CD4-positive, alpha-beta memory T cell (primary cell): ENCODE measurements at regions of chr10 and their contacts with region 1.

Region 1: DNA sequence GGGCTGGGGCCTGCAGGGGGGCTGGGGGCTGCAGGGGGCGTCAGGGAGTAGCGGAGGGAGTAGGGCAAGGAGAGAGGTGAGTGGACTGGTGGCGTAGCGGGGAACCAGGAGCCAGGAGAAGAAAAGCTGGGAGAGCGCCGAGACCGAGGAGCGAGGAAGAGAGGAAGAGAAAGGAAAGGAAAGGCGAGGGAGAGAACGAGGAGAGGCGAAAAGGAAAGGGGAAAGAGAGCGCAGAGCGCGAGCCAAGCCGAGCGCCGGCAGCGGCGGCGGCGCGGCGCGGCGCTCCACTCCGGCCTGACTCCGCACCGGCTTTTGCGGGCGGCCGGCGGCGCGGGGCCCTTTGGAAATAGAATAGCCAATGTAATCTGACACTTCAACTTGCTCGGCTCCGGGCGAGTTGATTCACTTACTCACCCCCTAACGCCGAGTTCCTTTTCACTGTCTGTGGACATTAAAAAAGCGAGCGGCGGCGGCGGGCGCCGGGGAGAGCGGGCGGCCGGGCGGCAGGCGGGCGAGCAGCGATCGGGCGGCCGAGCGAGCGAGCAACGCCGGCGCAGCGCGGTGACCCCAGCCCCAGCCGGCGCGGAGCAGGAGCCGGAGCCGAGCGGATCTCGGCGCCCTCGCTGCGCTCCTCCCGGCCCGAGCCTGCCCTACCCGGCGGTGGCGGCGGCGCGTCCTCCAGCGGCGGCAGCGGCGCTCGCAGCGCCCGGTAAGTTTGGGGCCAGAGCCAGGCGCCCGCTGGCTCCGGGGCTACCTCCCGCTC is at the start of gene ZMIZ1:
- DNase-seq: peak; percentile 83 to 87 (median 85)
- H3K4me3 ChIP-seq: peak within 1 kb of the TSS; percentile 61 to 85
- H3K4me3 Mint-ChIP-seq: peak within 1 kb of the TSS; percentile 94 to 99 (median 97)
- H3K27ac ChIP-seq: peak within 1 kb of the TSS; percentile 76
- H3K27ac Mint-ChIP-seq: peak within 1 kb of the TSS; percentile 90 to 97 (median 95)
- H3K4me1 ChIP-seq: peaks cover 50% of the 10 kb centered on the region
- H3K4me1 Mint-ChIP-seq: peaks cover 29 to 71% (median 44%) of the 10 kb centered on the region in 4 donors
- H3K27me3 ChIP-seq: no peaks in the 10 kb centered on the region
- H3K27me3 Mint-ChIP-seq: no peaks in the 10 kb centered on the region
- total RNA-seq, gene ZMIZ1: 23.1 to 25.4 TPM

Region 2: GRCh38 chr10:78029269-78030226 is 1039.2 kb before region 1 on chr10 and contains the start of gene POLR3A:
- CTCF ChIA-PET with region 1: no interaction called
- POLR2A ChIA-PET with region 1: interaction called, 3 read pairs
- intact Hi-C with region 1: loop called (anchors 1 kb)
- DNase-seq: peak; percentile 91 to 93 (median 92)
- H3K4me3 ChIP-seq: peak within 1 kb of the TSS; percentile 80 to 98
- H3K4me3 Mint-ChIP-seq: peak within 1 kb of the TSS; percentile 98 to 99 (median 99)
- H3K27ac ChIP-seq: peak within 1 kb of the TSS; percentile 71
- H3K27ac Mint-ChIP-seq: peak within 1 kb of the TSS; percentile 92 to 98 (median 96)
- H3K4me1 ChIP-seq: peaks cover 32% of the 10 kb centered on the region
- H3K4me1 Mint-ChIP-seq: peaks cover 28 to 52% (median 40%) of the 10 kb centered on the region in 4 donors
- H3K27me3 ChIP-seq: no peaks in the 10 kb centered on the region
- H3K27me3 Mint-ChIP-seq: no peaks in the 10 kb centered on the region
- total RNA-seq, gene POLR3A: 16.9 to 17.6 TPM

Region 3: GRCh38 chr10:78302989-78303854 is 765.5 kb before region 1 on chr10:
- CTCF ChIA-PET with region 1: no interaction called
- POLR2A ChIA-PET with region 1: interaction called, 3 read pairs
- intact Hi-C with region 1: loop called (anchors 1 kb)
- DNase-seq: peak; percentile 93 to 96 (median 95)
- H3K4me3 ChIP-seq: peak overlapping the region; percentile 67 to 70
- H3K4me3 Mint-ChIP-seq: peak overlapping the region; percentile 92 to 97 (median 94)
- H3K27ac ChIP-seq: peak overlapping the region; percentile 91
- H3K27ac Mint-ChIP-seq: peak overlapping the region; percentile 95 to 99 (median 98)
- H3K4me1 ChIP-seq: peaks cover 17% of the 10 kb centered on the region
- H3K4me1 Mint-ChIP-seq: peaks cover 7 to 24% (median 14%) of the 10 kb centered on the region in 4 donors
- H3K27me3 ChIP-seq: no peaks in the 10 kb centered on the region
- H3K27me3 Mint-ChIP-seq: peaks cover 0 to 2% of the 10 kb centered on the region in 2 donors

Region 4: DNA sequence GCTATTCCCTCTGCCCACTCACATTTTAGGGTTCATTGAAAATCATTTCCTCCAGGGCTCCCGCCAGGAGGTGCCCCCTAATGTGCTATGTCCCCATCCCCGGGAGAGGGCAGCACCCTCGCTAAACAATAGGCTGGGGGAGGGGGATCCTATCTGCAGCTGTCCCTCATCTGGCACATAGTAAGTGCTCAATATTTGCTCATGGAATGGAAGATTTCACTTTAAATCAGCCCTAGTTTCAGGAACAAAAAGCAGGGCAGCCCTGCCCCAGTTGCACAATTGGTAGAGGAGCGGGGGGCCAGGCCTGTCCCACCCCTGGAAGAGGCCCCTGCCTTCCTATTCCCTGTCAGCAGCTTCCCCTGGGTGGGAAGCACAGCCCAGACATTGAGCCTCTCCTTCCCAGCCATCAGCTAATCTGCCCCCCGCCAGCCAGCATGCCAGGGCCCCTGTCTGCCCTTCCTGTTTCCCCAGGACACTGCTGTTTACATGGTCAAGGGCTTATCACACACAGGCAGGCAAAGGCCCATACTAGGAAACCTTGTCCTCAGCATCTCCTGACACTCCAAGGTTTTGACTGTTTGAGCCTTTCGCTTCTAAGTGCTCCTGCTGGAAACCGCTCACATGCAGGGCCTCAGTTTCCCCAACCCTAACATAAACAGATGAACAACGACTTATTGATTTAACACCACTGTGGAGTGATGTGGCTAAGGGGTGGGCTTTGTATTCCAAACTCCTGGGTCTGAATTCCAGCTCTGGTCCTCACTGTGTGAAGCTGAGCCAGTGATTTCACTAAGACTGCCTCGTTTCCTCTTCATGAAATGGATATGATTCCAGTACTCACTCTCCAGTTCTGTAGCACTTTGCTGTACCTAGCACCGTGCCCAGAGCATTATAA is 130.7 kb before region 1 on chr10:
- CTCF ChIA-PET with region 1: no interaction called
- POLR2A ChIA-PET with region 1: no interaction called
- intact Hi-C with region 1: loop called (anchors 1 kb)
- DNase-seq: peak in 3 of 5 donors; percentile 4 to 17 (median 7)
- H3K4me3 ChIP-seq: no peak overlapping the region
- H3K4me3 Mint-ChIP-seq: no peak overlapping the region
- H3K27ac ChIP-seq: no peak overlapping the region
- H3K27ac Mint-ChIP-seq: peak overlapping the region in 1 of 7 donors; percentile 37
- H3K4me1 ChIP-seq: no peaks in the 10 kb centered on the region
- H3K4me1 Mint-ChIP-seq: no peaks in the 10 kb centered on the region
- H3K27me3 ChIP-seq: no peaks in the 10 kb centered on the region
- H3K27me3 Mint-ChIP-seq: no peaks in the 10 kb centered on the region

Region 5: GRCh38 chr10:79025199-79025832 is 43.4 kb before region 1 on chr10:
- CTCF ChIA-PET with region 1: no interaction called
- POLR2A ChIA-PET with region 1: interaction called, 9 read pairs
- intact Hi-C with region 1: loop called (anchors 1 kb)
- DNase-seq: peak in 4 of 5 donors; percentile 15 to 41 (median 23)
- H3K4me3 ChIP-seq: no peak overlapping the region
- H3K4me3 Mint-ChIP-seq: peak overlapping the region in 5 of 8 donors; percentile 7 to 41 (median 23)
- H3K27ac ChIP-seq: no peak overlapping the region
- H3K27ac Mint-ChIP-seq: peak overlapping the region in 4 of 7 donors; percentile 20 to 68 (median 51)
- H3K4me1 ChIP-seq: peaks cover 29% of the 10 kb centered on the region
- H3K4me1 Mint-ChIP-seq: peaks cover 14 to 41% (median 30%) of the 10 kb centered on the region in 4 donors
- H3K27me3 ChIP-seq: no peaks in the 10 kb centered on the region
- H3K27me3 Mint-ChIP-seq: no peaks in the 10 kb centered on the region

Region 6: DNA sequence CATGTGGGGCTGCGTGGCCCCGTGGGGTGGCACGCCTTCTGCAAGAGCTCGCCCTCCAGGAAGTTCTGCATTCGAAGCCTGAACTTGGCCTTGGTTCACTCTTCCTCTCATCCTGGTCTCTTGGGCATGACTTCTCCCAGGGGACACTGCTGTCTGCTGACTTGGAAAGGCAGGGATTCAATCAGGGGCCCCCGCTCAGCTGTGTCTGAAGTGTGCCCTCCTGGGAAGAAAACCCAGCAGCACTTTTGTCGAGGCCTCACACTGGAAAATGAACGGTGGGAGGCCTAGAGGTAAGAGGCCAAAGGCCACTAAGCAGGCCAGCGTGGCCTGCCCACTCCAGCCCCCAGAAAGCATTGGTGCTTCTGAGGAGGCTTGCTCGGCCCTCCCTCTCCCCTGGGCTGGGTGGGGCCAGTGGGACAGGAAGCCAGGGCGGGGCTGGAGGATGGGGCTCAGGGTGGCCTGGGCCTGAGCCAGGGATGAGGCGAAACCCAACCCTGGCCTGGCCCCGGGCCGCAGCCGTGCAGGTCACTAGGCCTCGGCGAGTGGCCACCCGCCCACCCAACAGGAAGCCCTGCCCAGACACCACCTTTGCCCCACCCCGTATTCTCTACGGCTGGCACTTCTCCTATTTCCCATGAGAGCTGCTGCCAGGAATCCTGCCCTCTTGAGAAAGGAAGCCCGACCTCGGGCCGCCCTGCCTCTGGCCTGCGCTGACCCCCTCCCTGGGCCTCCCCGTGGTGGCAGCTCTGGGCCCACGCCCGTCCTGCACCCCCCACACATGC is 81.1 kb after region 1 on chr10:
- CTCF ChIA-PET with region 1: no interaction called
- POLR2A ChIA-PET with region 1: interaction called, 4 read pairs
- intact Hi-C with region 1: loop called (anchors 5 kb)
- DNase-seq: peak in 4 of 5 donors; percentile 15 to 24 (median 20)
- H3K4me3 ChIP-seq: no peak overlapping the region
- H3K4me3 Mint-ChIP-seq: peak overlapping the region in 4 of 8 donors; percentile 25 to 73 (median 50)
- H3K27ac ChIP-seq: no peak overlapping the region
- H3K27ac Mint-ChIP-seq: peak overlapping the region in 6 of 7 donors; percentile 59 to 80 (median 74)
- H3K4me1 ChIP-seq: peaks cover 64% of the 10 kb centered on the region
- H3K4me1 Mint-ChIP-seq: peaks cover 23 to 57% (median 43%) of the 10 kb centered on the region in 4 donors
- H3K27me3 ChIP-seq: no peaks in the 10 kb centered on the region
- H3K27me3 Mint-ChIP-seq: no peaks in the 10 kb centered on the region

Region 7: GRCh38 chr10:79445141-79445976 is 376.6 kb after region 1 on chr10 and contains the start of gene ZCCHC24:
- CTCF ChIA-PET with region 1: no interaction called
- POLR2A ChIA-PET with region 1: no interaction called
- intact Hi-C with region 1: loop called (anchors 1 kb)
- DNase-seq: peak; percentile 95 to 97 (median 97)
- H3K4me3 ChIP-seq: peak within 1 kb of the TSS; percentile 63 to 64
- H3K4me3 Mint-ChIP-seq: peak within 1 kb of the TSS; percentile 87 to 98 (median 90)
- H3K27ac ChIP-seq: peak within 1 kb of the TSS; percentile 57
- H3K27ac Mint-ChIP-seq: peak within 1 kb of the TSS; percentile 85 to 98 (median 91)
- H3K4me1 ChIP-seq: peaks cover 21% of the 10 kb centered on the region
- H3K4me1 Mint-ChIP-seq: peaks cover 17 to 34% (median 23%) of the 10 kb centered on the region in 4 donors
- H3K27me3 ChIP-seq: no peaks in the 10 kb centered on the region
- H3K27me3 Mint-ChIP-seq: no peaks in the 10 kb centered on the region
- total RNA-seq, gene ZCCHC24: 1.7 to 1.9 TPM